WTC11 (cell line): ENCODE measurements at regions of chr1 and their contacts with region 1.

Region 1: DNA sequence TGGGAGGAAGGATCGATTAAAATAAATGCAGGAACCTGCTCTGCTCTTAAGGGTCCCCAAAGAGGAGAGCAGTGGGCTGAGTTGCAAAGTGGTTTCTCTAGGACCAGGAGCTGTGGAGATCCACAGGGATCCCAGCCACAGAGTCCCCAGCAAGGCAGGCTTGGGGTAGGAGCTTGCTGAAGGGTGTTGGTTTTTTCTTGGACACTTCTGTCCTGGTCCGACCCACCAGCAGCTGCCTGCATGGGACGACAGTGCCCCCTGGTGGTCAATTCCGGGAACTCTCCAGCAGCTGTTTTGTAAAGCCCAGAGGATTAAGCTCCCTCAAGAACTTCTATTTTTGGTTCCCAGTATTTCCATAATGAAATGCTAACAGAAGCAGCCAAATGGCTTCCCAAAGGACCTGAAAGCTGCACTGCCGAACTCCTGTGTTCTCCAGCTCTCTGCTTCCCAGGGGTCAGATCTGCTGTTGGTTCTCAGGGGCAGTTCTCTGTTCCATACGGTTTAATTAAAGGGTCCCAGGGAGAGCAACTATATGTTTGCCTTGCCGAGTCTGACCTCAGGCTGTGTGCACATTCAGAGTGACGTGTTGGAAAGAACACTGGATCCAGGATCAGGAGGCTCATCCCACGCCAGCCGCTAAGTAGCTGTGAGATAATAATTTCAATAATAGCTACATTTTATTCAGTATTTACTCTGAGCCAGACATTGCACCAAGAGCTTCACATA is 23.2 kb downstream of the NENF start:
- DNase-seq: peak; percentile 93
- ATAC-seq: peak; percentile 79
- H3K4me3 Mint-ChIP-seq: no peak overlapping the region
- H3K27ac Mint-ChIP-seq: no peak overlapping the region
- H3K4me1 Mint-ChIP-seq: no peaks in the 10 kb centered on the region
- H3K27me3 Mint-ChIP-seq: no peaks in the 10 kb centered on the region
- CTCF ChIP-seq: peak; percentile 99

Region 2: GRCh38 chr1:212070720-212071302 is 385.2 kb before region 1 on chr1:
- CTCF ChIA-PET with region 1: interaction called, 42 read pairs
- POLR2A ChIA-PET with region 1: no interaction called
- DNase-seq: no peak
- ATAC-seq: peak; percentile 24; the same call in 1 of the 2 replicates
- H3K4me3 Mint-ChIP-seq: no peak overlapping the region
- H3K27ac Mint-ChIP-seq: peak overlapping the region; percentile 57; the same call in 1 of the 2 replicates
- H3K4me1 Mint-ChIP-seq: no peaks in the 10 kb centered on the region
- H3K27me3 Mint-ChIP-seq: no peaks in the 10 kb centered on the region
- CTCF ChIP-seq: no peak

Region 3: DNA sequence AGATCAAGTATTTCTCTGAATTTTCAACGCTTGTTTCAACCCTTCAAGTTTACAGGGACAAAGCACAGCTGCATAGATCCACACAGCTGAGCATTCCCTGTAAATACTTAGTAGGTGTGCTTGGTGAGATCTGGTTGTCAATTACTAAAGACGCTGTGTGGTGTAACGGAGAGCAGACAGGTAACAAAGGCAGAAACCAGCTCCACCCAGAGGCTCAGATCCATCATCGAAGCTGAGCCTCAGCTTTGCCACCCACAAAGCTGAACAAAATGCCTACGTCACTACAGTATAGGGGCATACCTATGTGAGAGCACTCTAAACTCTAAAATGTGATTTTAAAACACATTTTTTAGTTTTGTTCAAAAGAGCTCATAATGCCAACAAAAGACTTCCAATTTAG is 80.0 kb before region 1 on chr1:
- CTCF ChIA-PET with region 1: interaction called, 17 read pairs
- POLR2A ChIA-PET with region 1: no interaction called
- DNase-seq: no peak
- ATAC-seq: no peak
- H3K4me3 Mint-ChIP-seq: no peak overlapping the region
- H3K27ac Mint-ChIP-seq: peak overlapping the region; percentile 34; the same call in 1 of the 2 replicates
- H3K4me1 Mint-ChIP-seq: no peaks in the 10 kb centered on the region
- H3K27me3 Mint-ChIP-seq: no peaks in the 10 kb centered on the region
- CTCF ChIP-seq: no peak

Region 4: DNA sequence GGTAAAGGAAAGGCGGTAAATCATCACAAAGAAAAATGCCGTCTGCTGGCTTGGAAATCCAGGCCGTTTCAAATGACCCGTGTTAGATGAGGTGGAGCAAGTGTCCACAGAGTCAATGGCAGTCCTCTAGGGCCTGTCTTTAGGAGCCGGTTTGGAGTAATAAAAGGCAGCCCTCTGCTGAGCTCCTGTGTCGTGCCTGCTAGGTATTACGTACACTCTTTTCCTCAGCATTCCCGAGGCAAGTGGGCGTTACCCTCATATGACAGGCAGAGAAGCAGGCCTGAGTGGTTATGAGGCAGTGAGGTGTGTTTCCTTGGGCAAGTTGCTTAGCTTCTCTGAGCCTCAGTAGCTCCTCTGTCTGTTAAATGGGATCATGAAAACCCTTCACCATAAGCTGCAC is 15.5 kb before region 1 on chr1:
- CTCF ChIA-PET with region 1: interaction called, 15 read pairs
- POLR2A ChIA-PET with region 1: no interaction called
- DNase-seq: no peak
- ATAC-seq: peak; percentile 44
- H3K4me3 Mint-ChIP-seq: no peak overlapping the region
- H3K27ac Mint-ChIP-seq: no peak overlapping the region; the same call in 1 of the 2 replicates
- H3K4me1 Mint-ChIP-seq: no peaks in the 10 kb centered on the region
- H3K27me3 Mint-ChIP-seq: no peaks in the 10 kb centered on the region
- CTCF ChIP-seq: no peak

Region 5: DNA sequence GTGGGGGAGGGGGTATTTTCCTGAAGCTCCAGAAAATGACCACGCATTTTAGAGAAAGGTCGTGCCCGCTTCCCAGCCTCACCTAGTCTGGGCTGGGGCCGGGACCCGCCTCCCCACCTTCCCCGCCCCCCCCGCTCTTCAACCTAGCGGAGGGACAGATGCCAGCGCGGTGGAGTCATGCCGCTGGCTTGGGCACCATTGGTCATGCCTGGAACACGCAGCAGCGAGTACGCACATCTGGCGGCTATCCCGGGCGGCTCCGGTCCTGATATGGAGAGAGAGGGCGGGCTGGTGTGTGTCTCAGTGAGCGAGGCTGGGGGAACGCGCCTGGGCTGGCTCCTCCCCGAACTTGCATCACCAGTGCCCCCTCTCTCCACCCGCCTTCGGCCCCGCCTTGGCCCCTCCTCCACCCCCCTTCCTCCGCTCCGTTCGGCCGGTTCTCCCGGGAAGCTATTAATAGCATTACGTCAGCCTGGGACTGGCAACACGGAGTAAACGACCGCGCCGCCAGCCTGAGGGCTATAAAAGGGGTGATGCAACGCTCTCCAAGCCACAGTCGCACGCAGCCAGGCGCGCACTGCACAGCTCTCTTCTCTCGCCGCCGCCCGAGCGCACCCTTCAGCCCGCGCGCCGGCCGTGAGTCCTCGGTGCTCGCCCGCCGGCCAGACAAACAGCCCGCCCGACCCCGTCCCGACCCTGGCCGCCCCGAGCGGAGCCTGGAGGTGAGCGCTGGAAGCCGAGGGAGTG is 152.4 kb after region 1 on chr1 and contains the start of gene ATF3:
- CTCF ChIA-PET with region 1: interaction called, 10 read pairs
- POLR2A ChIA-PET with region 1: interaction called, 7 read pairs
- DNase-seq: peak; percentile 99
- ATAC-seq: peak; percentile 84
- H3K4me3 Mint-ChIP-seq: peak within 1 kb of the TSS; percentile 89
- H3K27ac Mint-ChIP-seq: peak within 1 kb of the TSS; percentile 49; the same call in 1 of the 2 replicates
- H3K4me1 Mint-ChIP-seq: peaks cover 62% of the 10 kb centered on the region
- H3K27me3 Mint-ChIP-seq: peaks cover 64% of the 10 kb centered on the region
- CTCF ChIP-seq: no peak
- total RNA-seq, gene ATF3: 12.5 to 19.4 TPM (median 14.6 TPM) in 3 replicates

Region 6: DNA sequence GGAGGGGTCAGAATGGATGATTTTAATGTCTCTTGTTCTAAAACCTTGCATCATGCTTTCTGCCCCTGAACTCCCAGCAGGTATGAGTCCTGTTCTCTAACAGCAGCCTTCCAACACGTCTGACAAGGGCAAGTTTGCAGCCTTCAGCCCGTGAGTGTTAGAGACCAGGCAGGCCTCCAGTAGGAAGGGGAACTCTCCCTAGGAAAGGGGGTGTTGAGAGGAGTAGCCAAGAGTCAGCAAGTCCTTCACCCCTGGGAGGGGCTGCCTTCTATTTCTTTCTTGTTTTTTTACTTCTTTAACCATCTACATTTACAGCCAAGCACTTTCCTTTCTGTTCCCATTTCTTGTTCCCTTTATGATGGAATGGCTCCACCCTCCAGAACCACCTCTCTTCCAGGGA is 229.5 kb after region 1 on chr1:
- CTCF ChIA-PET with region 1: no interaction called
- POLR2A ChIA-PET with region 1: no interaction called
- DNase-seq: no peak
- ATAC-seq: no peak
- H3K4me3 Mint-ChIP-seq: no peak overlapping the region
- H3K27ac Mint-ChIP-seq: no peak overlapping the region
- H3K4me1 Mint-ChIP-seq: peaks cover 15% of the 10 kb centered on the region
- H3K27me3 Mint-ChIP-seq: no peaks in the 10 kb centered on the region
- CTCF ChIP-seq: no peak

Region 7: DNA sequence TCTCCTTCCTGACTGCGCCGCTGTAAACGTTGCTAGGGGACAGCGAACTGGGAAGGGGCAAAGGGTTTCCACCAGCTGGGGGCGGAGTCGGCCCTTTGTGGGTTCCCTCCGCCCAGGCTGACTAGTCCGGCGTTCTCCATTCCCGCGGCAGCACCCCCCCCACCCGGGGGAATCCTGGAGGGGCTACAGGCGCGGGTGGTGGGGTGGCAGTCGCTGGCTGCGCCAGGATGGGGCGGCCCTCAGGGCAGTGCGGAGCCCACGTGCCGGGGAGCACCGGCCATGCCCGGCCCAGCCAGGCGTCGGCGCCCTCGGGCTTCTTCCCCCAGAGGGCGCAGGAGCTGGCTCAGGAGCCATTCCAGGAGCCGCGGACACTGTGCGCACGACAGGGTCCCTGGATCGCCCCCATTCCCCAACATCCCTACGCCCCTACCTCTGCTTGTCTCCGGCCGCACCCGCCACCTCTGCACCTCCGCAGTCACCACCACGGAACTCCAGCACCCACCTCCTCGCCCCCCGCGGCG is 243.2 kb after region 1 on chr1:
- CTCF ChIA-PET with region 1: interaction called, 20 read pairs
- POLR2A ChIA-PET with region 1: no interaction called
- DNase-seq: peak; percentile 76
- ATAC-seq: peak; percentile 82
- H3K4me3 Mint-ChIP-seq: peak overlapping the region; percentile 63
- H3K27ac Mint-ChIP-seq: no peak overlapping the region
- H3K4me1 Mint-ChIP-seq: peaks cover 18% of the 10 kb centered on the region
- H3K27me3 Mint-ChIP-seq: peaks cover 84% of the 10 kb centered on the region
- CTCF ChIP-seq: no peak